ENCODE measurements at regions of chr4 and their contacts with region 1.

Region 1: DNA sequence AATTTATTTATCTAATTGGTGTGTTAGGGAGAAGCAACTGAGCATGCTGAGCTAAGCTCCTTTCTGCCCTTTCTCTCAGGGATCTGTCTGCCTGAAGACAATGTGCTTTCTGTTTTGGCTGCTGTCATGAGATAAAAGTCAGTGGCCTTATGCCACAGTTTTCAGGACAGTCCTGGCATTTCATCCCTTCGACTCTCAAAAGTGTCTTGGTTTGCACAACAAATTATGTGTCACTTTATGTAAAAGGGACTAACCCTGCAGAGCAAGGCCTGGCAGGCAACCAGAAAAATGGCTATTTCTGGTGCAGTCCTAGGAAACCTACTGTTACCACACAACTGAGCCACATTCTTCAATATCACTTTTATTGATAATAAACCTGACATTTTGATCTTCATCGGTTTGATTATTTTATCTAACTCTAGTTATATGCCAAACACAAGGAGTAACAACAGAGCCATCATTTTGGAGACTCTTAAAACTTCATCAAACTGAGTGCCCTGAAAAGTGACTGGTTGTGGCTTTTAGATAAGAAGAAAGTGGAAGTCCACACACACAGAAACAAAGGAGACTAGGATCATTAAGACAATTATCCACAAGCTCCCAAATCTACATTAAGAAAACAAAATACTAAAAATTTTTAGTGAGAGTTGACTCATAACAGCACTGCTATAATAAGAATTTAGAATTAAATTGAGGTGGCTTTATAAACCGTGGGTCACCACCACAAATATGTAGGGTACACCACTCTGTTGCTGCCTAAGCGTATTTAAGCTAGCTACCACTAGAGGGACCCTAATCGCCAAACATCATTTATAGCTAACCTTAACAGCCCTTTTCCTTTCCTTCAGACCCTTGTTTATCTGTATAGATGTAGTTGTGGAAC is 95.9 kb upstream of the PTPN13 start:
- DNase-seq: peak in 1 of 3 donors; percentile 25
- ATAC-seq: peak; percentile 67
- H3K4me3 ChIP-seq: no peak overlapping the region
- H3K4me1 ChIP-seq: no peaks in the 10 kb centered on the region
- CTCF ChIP-seq: peak; percentile 43

Region 2: DNA sequence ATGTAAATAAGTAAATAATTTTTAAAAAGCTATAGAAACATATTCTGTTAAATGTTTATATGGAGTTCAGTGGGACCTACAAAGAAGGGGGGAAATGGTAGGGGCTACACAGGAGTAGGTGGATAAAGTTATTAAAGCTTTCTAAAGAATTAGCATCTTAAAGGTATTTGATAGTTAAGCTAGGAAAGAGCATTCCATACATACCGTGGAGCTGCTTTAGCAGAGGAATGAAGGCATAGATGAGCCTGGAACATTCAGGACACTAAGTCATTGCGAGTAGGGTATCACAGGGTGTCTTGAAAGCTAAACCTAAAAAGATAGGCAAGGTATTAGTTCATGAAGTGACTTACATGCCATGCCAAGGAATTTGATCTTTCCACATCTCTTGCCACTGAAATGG is 290.6 kb after region 1 on chr4:
- intact Hi-C with region 1: no loop called
- DNase-seq: no peak
- ATAC-seq: no peak
- H3K4me3 ChIP-seq: no peak overlapping the region
- H3K4me1 ChIP-seq: no peaks in the 10 kb centered on the region
- CTCF ChIP-seq: no peak

Region 3: DNA sequence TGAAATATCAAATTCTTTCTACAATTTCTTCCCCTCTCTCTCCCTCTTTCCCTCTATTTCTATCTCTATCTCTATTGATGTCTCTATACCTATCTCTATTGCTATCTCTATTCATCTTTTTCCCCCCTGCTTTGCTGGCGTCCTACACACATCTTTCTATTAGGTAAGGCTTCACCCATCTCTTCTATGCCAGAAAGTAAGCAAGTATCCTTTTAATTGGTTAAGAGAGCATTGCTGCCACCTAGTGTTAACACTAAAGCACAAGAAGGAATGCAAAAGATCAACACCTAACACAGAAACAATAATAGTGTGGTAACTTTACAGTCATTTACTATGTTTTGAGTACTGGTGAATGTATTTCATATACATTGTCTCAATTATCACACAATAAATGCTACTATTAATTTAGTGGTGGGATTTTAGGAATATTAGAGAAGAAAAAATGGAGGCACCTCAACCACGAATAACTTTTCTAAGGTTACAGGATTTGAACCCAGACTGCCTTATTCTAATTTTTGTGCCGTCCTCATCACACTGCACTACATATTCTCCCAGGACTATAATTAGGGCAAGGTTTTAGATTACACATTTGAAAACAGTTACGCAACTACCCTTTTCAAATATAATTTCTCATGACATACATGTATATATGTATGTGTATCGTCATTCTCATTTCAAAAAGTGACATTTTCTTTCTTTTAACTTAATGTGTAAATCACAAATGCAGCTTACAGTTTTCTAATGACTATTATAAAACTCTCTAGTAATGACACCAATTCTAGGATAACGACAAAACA is 397.7 kb after region 1 on chr4:
- intact Hi-C with region 1: loop called (anchors 5 kb)
- DNase-seq: peak in 1 of 3 donors; percentile 64
- ATAC-seq: peak; percentile 48
- H3K4me3 ChIP-seq: no peak overlapping the region
- H3K4me1 ChIP-seq: no peaks in the 10 kb centered on the region
- CTCF ChIP-seq: peak; percentile 31